ENCODE measurements at regions of chr16 and their contacts with region 1.

Region 1: DNA sequence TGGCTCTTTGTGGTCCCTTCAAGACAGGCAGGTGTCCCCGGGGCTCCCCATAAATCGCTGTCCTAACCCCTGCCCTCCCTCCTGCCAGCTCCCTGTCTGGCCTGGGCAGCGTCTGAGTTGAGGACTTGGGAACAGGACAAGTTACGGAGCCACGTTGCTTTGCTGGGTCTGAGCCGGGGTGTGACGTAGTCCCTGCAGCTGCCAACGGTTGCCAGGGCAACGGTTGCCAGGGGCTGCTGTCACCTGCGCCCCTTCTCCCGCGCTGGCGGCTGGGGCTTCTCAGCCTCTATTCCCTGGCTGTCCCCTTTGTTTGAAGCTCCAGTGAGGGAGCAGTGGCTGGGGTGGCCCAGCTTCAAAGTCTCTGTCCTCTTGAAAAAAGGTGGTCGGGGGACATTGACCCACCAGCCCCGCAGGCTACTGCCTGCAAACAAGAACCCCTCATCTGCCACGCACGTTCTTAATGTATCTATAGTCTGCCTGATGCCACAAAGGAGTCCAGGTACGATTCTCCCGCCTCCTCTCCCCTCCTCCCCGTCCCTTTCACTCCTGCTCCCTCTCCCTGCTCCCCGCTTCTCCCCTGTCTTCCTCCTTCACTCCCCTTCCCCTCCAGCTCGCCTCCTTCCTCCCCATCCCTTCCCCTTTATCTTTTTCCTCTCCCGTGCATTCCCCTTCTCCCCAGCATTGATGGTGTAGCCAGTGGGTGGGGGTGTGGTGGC is 10.9 kb downstream of the ADGRG1 start:
- DNase-seq: no peak
- H3K4me3 ChIP-seq: no peak overlapping the region
- CTCF ChIP-seq: no peak

Region 2: GRCh38 chr16:57628008-57628781 is 11.1 kb before region 1 on chr16 and contains the start of gene ADGRG1:
- CTCF ChIA-PET with region 1: interaction called, 11 read pairs
- POLR2A ChIA-PET with region 1: interaction called, 3 read pairs
- DNase-seq: peak; percentile 71
- H3K4me3 ChIP-seq: peak within 1 kb of the TSS; percentile 54
- CTCF ChIP-seq: peak; percentile 16

Region 3: GRCh38 chr16:57658130-57658877 is 19.0 kb after region 1 on chr16:
- CTCF ChIA-PET with region 1: no interaction called
- POLR2A ChIA-PET with region 1: no interaction called
- DNase-seq: no peak
- H3K4me3 ChIP-seq: no peak overlapping the region
- CTCF ChIP-seq: no peak